K562 (cell line): ENCODE measurements at regions of chr13 and their contacts with region 1.

Region 1: GRCh38 chr13:91714855-91715254 is 316.4 kb downstream of the GPC5 start:
- DNase-seq: no peak
- ATAC-seq: peak; percentile 27; the same call in 1 of the 3 replicates
- H3K4me3 ChIP-seq: no peak overlapping the region
- H3K27ac ChIP-seq: no peak overlapping the region
- H3K4me1 ChIP-seq: no peaks in the 10 kb centered on the region
- H3K27me3 ChIP-seq: no peaks in the 10 kb centered on the region
- CTCF ChIP-seq: no peak
- EP300 ChIP-seq: no peak
- POLR2A ChIP-seq: no peak
- RAD21 ChIP-seq: no peak

Region 2: GRCh38 chr13:91426913-91427312 is 287.9 kb before region 1 on chr13:
- CTCF ChIA-PET with region 1: no interaction called
- POLR2A ChIA-PET with region 1: no interaction called
- in situ Hi-C with region 1: no loop called
- intact Hi-C with region 1: loop called (anchors 5 kb)
- DNase-seq: peak in 1 of 4 experiments; percentile 49
- ATAC-seq: no peak; the same call in 2 of the 3 replicates
- H3K4me3 ChIP-seq: no peak overlapping the region
- H3K27ac ChIP-seq: no peak overlapping the region
- H3K4me1 ChIP-seq: no peaks in the 10 kb centered on the region
- H3K27me3 ChIP-seq: no peaks in the 10 kb centered on the region
- CTCF ChIP-seq: no peak
- EP300 ChIP-seq: no peak
- POLR2A ChIP-seq: no peak
- RAD21 ChIP-seq: no peak

Region 3: DNA sequence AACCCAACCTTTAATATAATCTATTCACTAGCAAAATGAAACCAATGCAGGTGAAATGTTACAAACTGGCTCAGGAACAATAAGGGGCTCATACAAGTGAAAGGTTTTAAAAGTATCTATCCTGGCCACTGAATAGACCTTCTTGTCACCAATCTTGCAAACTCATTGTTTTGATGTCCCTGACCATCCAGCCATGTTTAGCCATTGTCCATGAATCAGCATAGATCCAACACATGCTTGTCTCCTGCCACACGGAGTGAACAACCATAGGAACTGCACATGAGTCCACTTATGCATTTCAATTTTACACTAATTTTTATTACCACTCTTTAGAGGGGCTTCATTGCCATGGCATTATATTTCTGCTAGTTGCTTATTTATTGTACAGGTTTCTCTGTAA is 15.0 kb after region 1 on chr13:
- CTCF ChIA-PET with region 1: no interaction called
- POLR2A ChIA-PET with region 1: interaction called, 3 read pairs
- in situ Hi-C with region 1: no loop called
- intact Hi-C with region 1: loop called (anchors 2 kb)
- DNase-seq: no peak
- ATAC-seq: peak; percentile 64; the same call in 2 of the 3 replicates
- H3K4me3 ChIP-seq: no peak overlapping the region
- H3K27ac ChIP-seq: no peak overlapping the region
- H3K4me1 ChIP-seq: no peaks in the 10 kb centered on the region
- H3K27me3 ChIP-seq: no peaks in the 10 kb centered on the region
- CTCF ChIP-seq: no peak
- EP300 ChIP-seq: no peak
- POLR2A ChIP-seq: no peak
- RAD21 ChIP-seq: no peak